Naive thymus-derived CD4-positive, alpha-beta T cell (primary cell): ENCODE measurements at regions of chr6 and their contacts with region 1.

Region 1: DNA sequence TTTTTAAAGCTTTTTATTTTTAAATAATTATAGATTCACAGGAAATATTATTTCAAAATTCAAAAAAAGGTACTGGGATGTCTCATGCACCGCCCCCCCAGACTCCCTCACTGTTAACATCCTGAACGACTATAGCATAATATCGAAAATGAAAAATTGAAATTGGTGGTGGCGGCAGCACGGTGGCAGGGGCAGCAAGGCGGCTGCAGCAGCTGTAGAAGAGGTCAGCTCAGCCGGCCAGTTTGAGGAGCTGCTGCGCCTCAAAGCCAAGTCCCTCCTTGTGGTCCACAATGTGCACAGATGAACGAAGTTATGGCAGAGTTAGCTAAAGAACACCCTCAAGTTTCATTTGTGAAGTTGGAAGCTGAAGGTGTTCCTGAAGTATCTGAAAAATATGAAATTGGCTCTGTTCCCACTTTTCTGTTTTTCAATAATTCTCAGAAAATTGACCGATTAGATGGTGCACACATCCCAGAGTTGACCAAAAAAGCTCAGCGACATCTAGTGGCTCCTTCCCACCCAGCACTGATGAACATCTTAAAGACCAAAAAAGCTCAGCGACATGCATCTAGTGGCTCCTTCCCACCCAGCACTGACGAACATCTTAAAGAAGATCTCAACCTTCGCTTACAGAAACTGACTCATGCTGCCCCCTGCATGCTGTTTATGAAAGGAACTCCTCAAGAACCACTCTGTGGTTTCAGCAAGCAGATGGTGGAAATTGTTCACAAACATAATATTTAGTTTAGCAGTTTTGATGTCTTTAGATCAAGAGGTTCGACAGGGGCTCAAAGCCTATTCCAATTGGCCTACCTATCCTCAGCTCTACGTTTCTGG is 100.8 kb downstream of the FAM217A start:
- DNase-seq: peak in 8 of 9 donors; percentile 23 to 69 (median 52)
- ATAC-seq: peak; percentile 98
- H3K4me3 ChIP-seq: no peak overlapping the region
- H3K4me3 Mint-ChIP-seq: no peak overlapping the region
- H3K27ac ChIP-seq: no peak overlapping the region
- H3K27ac Mint-ChIP-seq: peak overlapping the region in 3 of 9 donors; percentile 5 to 66 (median 5)
- H3K4me1 ChIP-seq: no peaks in the 10 kb centered on the region
- H3K4me1 Mint-ChIP-seq: peaks cover 6 to 13% (median 10%) of the 10 kb centered on the region in 7 donors
- H3K27me3 ChIP-seq: no peaks in the 10 kb centered on the region
- H3K27me3 Mint-ChIP-seq: peaks cover 0 to 30% (median 0%) of the 10 kb centered on the region in 5 donors

Region 2: DNA sequence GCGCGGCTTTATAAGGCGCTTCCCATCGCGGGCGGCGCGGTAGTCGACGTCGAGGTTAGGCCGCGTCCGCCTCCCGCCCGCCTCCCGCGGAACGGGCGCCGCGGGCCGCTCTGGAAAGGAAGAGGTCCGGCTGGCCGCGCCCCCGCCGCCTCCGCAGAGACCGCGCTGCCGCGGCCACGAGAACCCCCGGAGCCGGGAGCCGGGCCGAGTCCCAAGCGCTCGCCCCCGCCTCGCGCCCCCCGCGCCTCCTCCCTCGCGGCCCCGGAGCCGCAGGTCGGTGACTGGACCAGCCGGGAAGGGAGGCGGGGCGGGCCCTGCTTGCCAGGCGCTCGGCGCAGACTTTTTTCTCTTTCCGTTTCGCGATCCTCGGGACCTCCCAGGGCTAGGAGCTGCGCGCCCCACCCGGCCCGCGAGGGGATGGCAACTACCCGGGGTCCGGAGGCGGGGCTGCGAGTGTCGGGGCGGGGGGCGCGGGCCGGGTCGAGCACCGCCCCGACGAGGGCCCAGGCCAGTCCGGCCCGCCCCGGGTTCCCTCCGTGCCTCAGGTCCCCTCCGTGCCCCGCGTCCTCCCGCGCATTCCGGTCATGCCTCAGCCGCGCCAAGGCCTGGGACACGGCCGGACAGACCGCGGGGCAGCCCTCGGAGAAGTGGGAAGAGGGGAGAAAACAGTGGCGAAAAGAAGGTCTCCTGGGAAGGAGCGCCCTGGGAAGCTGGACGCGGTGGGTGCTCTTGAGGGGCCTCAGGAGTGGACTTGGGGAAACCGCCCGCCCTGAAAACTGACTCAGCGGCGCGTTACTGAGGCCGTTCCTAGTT is 226.2 kb before region 1 on chr6:
- CTCF ChIA-PET with region 1: interaction called, 12 read pairs
- POLR2A ChIA-PET with region 1: no interaction called
- intact Hi-C with region 1: no loop called
- DNase-seq: peak; percentile 11 to 72 (median 38)
- ATAC-seq: peak; percentile 77
- H3K4me3 ChIP-seq: peak overlapping the region; percentile 46
- H3K4me3 Mint-ChIP-seq: peak overlapping the region in 9 of 10 donors; percentile 35 to 82 (median 53)
- H3K27ac ChIP-seq: no peak overlapping the region
- H3K27ac Mint-ChIP-seq: no peak overlapping the region
- H3K4me1 ChIP-seq: no peaks in the 10 kb centered on the region
- H3K4me1 Mint-ChIP-seq: peaks cover 0 to 6% (median 4%) of the 10 kb centered on the region in 7 donors
- H3K27me3 ChIP-seq: peaks cover 7 to 9% of the 10 kb centered on the region in 2 donors
- H3K27me3 Mint-ChIP-seq: peaks cover 36 to 72% (median 40%) of the 10 kb centered on the region in 5 donors

Region 3: DNA sequence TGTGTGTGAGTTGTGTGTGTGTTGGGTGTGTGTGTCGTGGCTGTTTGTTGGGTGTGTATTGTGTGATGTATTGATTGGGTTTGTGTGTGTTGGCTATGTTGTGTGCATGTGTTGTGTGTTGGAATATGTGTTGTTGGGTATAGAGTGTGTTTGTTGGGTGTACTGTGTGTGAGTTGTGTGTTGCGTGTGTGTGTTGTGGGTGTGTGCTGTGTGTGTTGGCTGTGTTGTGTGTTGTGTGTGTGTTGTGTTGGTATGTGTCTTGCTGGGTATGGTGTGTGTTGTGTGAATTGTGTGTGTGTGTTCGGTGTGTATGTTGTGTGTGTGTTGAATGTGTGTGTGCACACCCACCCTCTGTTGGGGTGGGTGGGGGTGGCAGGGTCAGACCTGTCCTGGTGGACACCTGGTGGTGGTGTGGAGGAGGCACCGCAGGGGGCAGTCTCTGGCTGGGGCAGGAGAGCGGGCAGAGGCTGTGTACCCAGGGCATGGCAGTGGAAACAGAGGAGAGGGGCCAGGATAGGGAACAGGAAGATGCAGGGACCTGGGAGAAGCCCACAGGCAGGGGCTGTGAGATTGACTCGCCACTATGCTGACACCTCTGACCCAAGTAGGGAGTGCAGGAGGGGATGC is 201.1 kb before region 1 on chr6:
- CTCF ChIA-PET with region 1: no interaction called
- POLR2A ChIA-PET with region 1: no interaction called
- intact Hi-C with region 1: no loop called
- DNase-seq: no peak
- ATAC-seq: no peak
- H3K4me3 ChIP-seq: no peak overlapping the region
- H3K4me3 Mint-ChIP-seq: no peak overlapping the region
- H3K27ac ChIP-seq: no peak overlapping the region
- H3K27ac Mint-ChIP-seq: peak overlapping the region in 2 of 9 donors; percentile 29 to 52
- H3K4me1 ChIP-seq: no peaks in the 10 kb centered on the region
- H3K4me1 Mint-ChIP-seq: no peaks in the 10 kb centered on the region
- H3K27me3 ChIP-seq: no peaks in the 10 kb centered on the region
- H3K27me3 Mint-ChIP-seq: peaks cover 0 to 6% (median 4%) of the 10 kb centered on the region in 5 donors

Region 4: GRCh38 chr6:3876101-3876500 is 102.0 kb before region 1 on chr6:
- CTCF ChIA-PET with region 1: no interaction called
- POLR2A ChIA-PET with region 1: no interaction called
- intact Hi-C with region 1: no loop called
- DNase-seq: no peak
- ATAC-seq: no peak
- H3K4me3 ChIP-seq: no peak overlapping the region
- H3K4me3 Mint-ChIP-seq: no peak overlapping the region
- H3K27ac ChIP-seq: no peak overlapping the region
- H3K27ac Mint-ChIP-seq: no peak overlapping the region
- H3K4me1 ChIP-seq: no peaks in the 10 kb centered on the region
- H3K4me1 Mint-ChIP-seq: peaks cover 0 to 2% (median 0%) of the 10 kb centered on the region in 7 donors
- H3K27me3 ChIP-seq: no peaks in the 10 kb centered on the region
- H3K27me3 Mint-ChIP-seq: peaks cover 0 to 16% (median 9%) of the 10 kb centered on the region in 5 donors

Region 5: DNA sequence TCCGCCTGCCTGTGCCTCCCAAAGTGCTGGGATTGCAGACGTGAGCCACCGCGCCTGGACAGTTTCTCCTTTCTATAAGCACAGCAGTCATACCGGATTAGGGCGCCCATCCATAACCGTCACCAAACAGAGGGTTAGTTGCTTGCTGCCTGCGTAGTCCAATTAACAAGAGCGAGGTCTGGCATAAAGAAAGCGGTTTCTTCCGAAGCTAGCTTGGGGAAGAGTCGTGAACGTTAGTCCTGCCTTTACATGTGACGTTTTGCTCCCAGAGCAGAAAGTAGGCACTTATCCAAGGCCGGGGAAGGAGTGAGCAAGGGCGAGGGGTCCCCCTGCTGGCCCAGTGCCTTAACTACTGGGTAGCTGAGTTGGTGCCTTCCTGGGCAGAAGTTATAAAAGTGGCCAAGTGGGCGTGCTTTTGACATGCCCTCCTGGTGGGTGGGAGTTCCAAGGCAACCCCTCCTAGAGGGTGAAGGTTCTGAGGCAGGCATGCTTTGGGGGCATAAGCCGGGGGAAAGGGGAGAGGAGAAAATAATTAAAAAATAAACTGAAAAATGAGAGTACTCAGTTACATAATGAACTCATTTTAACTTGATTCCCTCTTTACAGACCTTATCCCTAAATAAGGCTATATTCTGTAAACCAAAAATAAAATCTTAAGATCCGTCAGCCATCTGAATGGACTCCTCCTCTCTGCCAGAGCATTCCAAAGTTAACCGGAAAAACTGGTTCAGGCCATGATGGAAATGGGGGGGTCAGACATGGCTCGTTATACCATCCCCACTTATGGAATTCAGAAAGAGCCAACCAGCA is 12.8 kb after region 1 on chr6:
- CTCF ChIA-PET with region 1: interaction called, 17 read pairs
- POLR2A ChIA-PET with region 1: no interaction called
- intact Hi-C with region 1: loop called in 1 of 2 experiments (anchors 1 kb)
- DNase-seq: peak; percentile 45 to 72 (median 58)
- ATAC-seq: peak; percentile 96
- H3K4me3 ChIP-seq: no peak overlapping the region
- H3K4me3 Mint-ChIP-seq: peak overlapping the region in 2 of 10 donors; percentile 19 to 29
- H3K27ac ChIP-seq: no peak overlapping the region
- H3K27ac Mint-ChIP-seq: peak overlapping the region in 3 of 9 donors; percentile 3 to 43 (median 19)
- H3K4me1 ChIP-seq: peaks cover 0 to 7% of the 10 kb centered on the region in 2 donors
- H3K4me1 Mint-ChIP-seq: peaks cover 13 to 37% (median 25%) of the 10 kb centered on the region in 7 donors
- H3K27me3 ChIP-seq: no peaks in the 10 kb centered on the region
- H3K27me3 Mint-ChIP-seq: no peaks in the 10 kb centered on the region

Region 6: GRCh38 chr6:4402439-4402976 is 424.4 kb after region 1 on chr6:
- CTCF ChIA-PET with region 1: no interaction called
- POLR2A ChIA-PET with region 1: no interaction called
- intact Hi-C with region 1: no loop called
- DNase-seq: no peak
- ATAC-seq: no peak
- H3K4me3 ChIP-seq: no peak overlapping the region
- H3K4me3 Mint-ChIP-seq: peak overlapping the region in 1 of 10 donors; percentile 4
- H3K27ac ChIP-seq: no peak overlapping the region
- H3K27ac Mint-ChIP-seq: no peak overlapping the region
- H3K4me1 ChIP-seq: no peaks in the 10 kb centered on the region
- H3K4me1 Mint-ChIP-seq: peaks cover 0 to under 1% (median 0%) of the 10 kb centered on the region in 7 donors
- H3K27me3 ChIP-seq: no peaks in the 10 kb centered on the region
- H3K27me3 Mint-ChIP-seq: peaks cover 0 to 34% (median 14%) of the 10 kb centered on the region in 5 donors